A549 (cell line): ENCODE measurements at regions of chr3 and their contacts with region 1.

Region 1: GRCh38 chr3:50350527-50351322 is at the starts of genes CYB561D2 and NPRL2:
- DNase-seq: peak; percentile 92
- ATAC-seq: peak; percentile 86 to 91
- H3K4me3 ChIP-seq: peak within 1 kb of the TSS; percentile 76
- H3K27ac ChIP-seq: peak within 1 kb of the TSS; percentile 97 to 100
- H3K4me1 ChIP-seq: peaks cover 28% of the 10 kb centered on the region; the same call in 2 of the 3 replicates
- CTCF ChIP-seq: no peak
- EP300 ChIP-seq: no peak
- POLR2A ChIP-seq: peak; percentile 68
- RAD21 ChIP-seq: no peak
- polyA plus RNA-seq, gene CYB561D2: 14.4 and 23.1 TPM in 2 replicates
- polyA plus RNA-seq, gene NPRL2: 19.9 and 28.5 TPM in 2 replicates

Region 2: DNA sequence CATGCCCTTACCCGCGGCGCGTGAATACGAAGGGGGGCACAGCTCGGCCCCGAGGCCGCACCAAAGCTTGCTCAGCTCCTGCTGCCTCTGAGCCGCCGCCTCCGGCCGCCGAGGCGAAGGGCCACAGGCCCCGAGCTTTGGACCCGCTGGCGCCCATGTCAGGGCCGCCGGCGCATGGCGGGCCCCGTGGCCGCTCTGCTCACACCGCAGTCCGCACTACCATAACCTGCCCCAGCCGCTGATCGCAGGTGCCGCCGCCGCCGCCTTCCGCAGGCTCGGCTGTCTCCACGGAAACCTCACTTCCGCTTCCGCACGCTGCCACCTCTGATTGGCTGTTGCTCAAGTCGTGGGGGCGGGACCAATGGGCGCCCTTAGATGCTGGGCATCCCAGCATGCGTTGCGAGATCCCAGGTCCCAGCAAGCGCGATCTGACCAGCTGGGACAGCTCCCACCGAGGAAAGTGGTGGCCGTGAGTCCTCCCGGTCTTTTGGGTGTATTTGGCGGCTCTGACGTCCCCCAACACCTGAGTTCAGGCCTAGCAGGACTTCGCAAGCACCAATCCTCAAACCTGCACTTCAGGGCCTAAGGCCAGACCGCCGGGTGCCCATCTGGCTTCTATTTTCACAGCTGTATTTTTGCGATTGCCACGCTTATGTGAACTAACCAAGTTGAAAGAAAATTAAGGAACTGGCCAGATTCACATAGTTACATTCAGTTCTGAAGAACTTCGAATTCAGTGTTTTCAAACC is 22.6 kb before region 1 on chr3 and contains the start of gene TUSC2:
- CTCF ChIA-PET with region 1: interaction called, 5 read pairs
- POLR2A ChIA-PET with region 1: interaction called, 13 read pairs
- DNase-seq: peak; percentile 93 to 96
- ATAC-seq: peak; percentile 82 to 91
- H3K4me3 ChIP-seq: peak within 1 kb of the TSS; percentile 71
- H3K27ac ChIP-seq: peak within 1 kb of the TSS; percentile 77 to 98
- H3K4me1 ChIP-seq: peaks cover 16% of the 10 kb centered on the region
- CTCF ChIP-seq: no peak
- EP300 ChIP-seq: no peak
- POLR2A ChIP-seq: peak; percentile 72
- RAD21 ChIP-seq: no peak
- polyA plus RNA-seq, gene TUSC2: 23.5 and 26.7 TPM in 2 replicates

Region 3: GRCh38 chr3:50337191-50337841 is 13.4 kb before region 1 on chr3:
- CTCF ChIA-PET with region 1: interaction called, 15 read pairs
- POLR2A ChIA-PET with region 1: interaction called, 12 read pairs
- DNase-seq: peak; percentile 97 to 98
- ATAC-seq: peak; percentile 91 to 93
- H3K4me3 ChIP-seq: peak overlapping the region; percentile 72
- H3K27ac ChIP-seq: peak overlapping the region; percentile 92 to 98
- H3K4me1 ChIP-seq: peaks cover 29% of the 10 kb centered on the region
- CTCF ChIP-seq: no peak
- EP300 ChIP-seq: no peak
- POLR2A ChIP-seq: peak; percentile 67
- RAD21 ChIP-seq: no peak

Region 4: DNA sequence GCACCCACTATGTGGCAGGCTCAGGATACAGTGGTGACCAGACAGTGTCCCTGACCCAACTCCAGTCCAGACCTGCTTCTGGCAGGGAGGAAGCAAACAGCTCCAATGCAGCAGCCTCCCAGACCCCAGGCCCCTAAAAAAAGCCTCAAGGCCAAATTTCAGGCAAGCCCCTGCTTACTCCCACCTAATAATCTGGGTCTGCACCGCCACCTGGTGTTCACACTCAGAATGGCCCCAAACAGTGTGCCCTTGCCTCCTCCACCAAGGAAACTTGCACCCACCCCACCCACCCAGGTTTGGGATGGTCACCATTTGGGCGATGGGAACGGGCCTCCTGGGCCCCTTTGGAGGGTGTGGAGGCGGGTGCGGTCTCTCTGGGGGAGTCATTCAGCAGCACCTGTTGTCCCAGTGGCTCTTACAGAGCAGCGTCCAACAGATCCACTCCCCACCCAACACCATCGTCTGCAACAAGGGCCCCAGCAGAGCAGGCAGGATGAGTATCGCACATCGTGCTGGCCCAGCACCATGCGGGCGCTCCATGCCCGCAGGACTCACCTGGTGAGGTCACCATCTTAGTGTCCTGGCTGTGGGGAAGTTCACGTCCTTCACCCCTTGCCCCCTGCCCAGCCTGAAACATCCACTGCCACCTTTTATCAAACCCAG is 199.5 kb after region 1 on chr3:
- CTCF ChIA-PET with region 1: interaction called, 39 read pairs
- POLR2A ChIA-PET with region 1: no interaction called
- DNase-seq: peak; percentile 32 to 52
- ATAC-seq: peak; percentile 63 to 86; a peak in 3 of 6 replicates
- H3K4me3 ChIP-seq: no peak overlapping the region
- H3K27ac ChIP-seq: no peak overlapping the region
- H3K4me1 ChIP-seq: no peaks in the 10 kb centered on the region
- CTCF ChIP-seq: peak; percentile 63
- EP300 ChIP-seq: no peak
- POLR2A ChIP-seq: no peak
- RAD21 ChIP-seq: peak; percentile 60 to 63